ENCODE measurements at regions of chr19 and their contacts with region 1.

Region 1: GRCh38 chr19:38402967-38403861 is at the start of gene FAM98C:
- H3K4me3 Mint-ChIP-seq: peak within 1 kb of the TSS; percentile 84
- H3K27ac Mint-ChIP-seq: peak within 1 kb of the TSS; percentile 87
- H3K4me1 Mint-ChIP-seq: peaks cover 24% of the 10 kb centered on the region
- H3K27me3 Mint-ChIP-seq: peaks cover 24% of the 10 kb centered on the region

Region 2: GRCh38 chr19:38335949-38336637 is 67.1 kb before region 1 on chr19:
- intact Hi-C with region 1: loop called (anchors 1 kb)
- H3K4me3 Mint-ChIP-seq: peak overlapping the region; percentile 96
- H3K27ac Mint-ChIP-seq: peak overlapping the region; percentile 98
- H3K4me1 Mint-ChIP-seq: peaks cover 25% of the 10 kb centered on the region
- H3K27me3 Mint-ChIP-seq: no peaks in the 10 kb centered on the region

Region 3: DNA sequence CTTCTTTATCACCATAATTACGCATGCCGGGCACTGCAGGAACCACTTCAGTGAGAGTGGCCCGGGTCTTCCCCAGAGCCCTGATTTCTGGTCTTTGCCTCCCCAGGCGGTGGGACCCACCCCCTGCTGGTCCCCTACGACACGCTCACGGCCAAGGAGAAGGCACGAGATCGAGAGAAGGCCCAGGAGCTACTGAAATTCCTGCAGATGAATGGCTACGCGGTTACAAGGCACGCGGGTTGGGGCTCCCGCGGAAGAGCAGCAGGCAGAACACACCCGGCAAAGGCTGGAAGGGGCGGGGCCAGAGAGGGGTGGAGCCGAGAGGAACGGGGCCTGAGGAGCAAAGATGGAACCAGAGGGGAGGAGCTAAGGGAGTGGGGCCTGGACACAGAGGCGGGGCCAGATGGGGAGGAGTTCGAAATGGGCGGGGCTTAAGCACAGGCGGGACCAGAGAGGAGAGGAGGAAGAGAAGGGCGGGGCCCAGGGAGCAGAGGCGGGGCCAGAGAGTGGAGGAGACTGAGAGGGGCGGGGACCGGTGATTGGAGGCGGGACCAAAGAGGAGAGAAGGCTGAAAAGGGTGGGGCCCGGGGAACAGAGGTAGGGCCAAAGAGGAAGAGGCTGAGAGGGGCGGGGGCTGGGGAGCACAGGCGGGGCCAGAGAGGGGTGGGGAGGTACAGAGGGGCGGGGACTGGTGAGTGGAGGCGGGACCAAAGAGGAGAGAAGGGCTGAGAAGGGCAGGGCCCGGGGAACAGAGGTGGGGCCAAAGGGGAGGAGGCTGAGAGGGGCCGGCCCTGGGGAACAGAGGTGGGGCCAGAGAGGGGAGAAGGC is 103.7 kb after region 1 on chr19:
- intact Hi-C with region 1: loop called (anchors 2 kb)
- H3K4me3 Mint-ChIP-seq: no peak overlapping the region
- H3K27ac Mint-ChIP-seq: no peak overlapping the region
- H3K4me1 Mint-ChIP-seq: peaks cover 6% of the 10 kb centered on the region
- H3K27me3 Mint-ChIP-seq: peaks cover 26% of the 10 kb centered on the region

Region 4: GRCh38 chr19:38634757-38635482 is 231.7 kb after region 1 on chr19:
- intact Hi-C with region 1: loop called (anchors 5 kb)
- H3K4me3 Mint-ChIP-seq: no peak overlapping the region
- H3K27ac Mint-ChIP-seq: peak overlapping the region; percentile 35
- H3K4me1 Mint-ChIP-seq: peaks cover 27% of the 10 kb centered on the region
- H3K27me3 Mint-ChIP-seq: no peaks in the 10 kb centered on the region